HepG2 (cell line): ENCODE measurements at regions of chr17 and their contacts with region 1.

Region 1: DNA sequence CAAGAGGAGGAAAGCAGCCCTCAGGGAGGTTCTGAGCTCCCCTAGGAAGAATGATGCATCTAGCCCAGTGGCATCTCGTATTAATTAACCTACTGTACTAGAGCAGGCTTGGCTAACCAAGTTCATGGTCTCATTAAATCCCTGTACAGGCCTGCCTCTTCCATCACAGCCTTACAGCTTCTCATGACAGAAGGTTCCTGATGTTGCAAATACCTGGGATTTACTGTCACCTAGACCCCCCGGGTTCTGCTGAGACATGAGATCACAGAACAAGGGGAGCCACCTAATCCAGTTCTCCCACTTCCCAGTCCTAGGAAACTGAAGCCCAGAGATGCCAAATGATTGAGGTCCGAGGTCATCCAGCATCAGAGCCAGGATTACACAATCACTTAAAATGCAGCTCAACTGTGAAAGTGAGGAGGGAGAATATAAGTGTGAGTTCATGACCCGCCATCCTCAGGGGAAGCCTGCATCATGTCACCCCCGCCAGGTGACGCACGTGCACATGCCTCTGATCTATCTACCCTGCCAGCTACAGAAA is 23.9 kb downstream of the ACLY start:
- DNase-seq: no peak
- ATAC-seq: no peak
- H3K4me3 ChIP-seq: no peak overlapping the region
- H3K27ac ChIP-seq: no peak overlapping the region
- H3K4me1 ChIP-seq: peaks cover 25% of the 10 kb centered on the region
- H3K27me3 ChIP-seq: no peaks in the 10 kb centered on the region
- CTCF ChIP-seq: no peak
- EP300 ChIP-seq: no peak
- POLR2A ChIP-seq: no peak
- RAD21 ChIP-seq: no peak

Region 2: GRCh38 chr17:41918314-41919164 is 23.7 kb after region 1 on chr17 and contains the start of gene ACLY:
- CTCF ChIA-PET with region 1: no interaction called
- POLR2A ChIA-PET with region 1: interaction called, 16 read pairs
- in situ Hi-C with region 1: no loop called
- intact Hi-C with region 1: no loop called
- DNase-seq: peak; percentile 97
- ATAC-seq: peak; percentile 93
- H3K4me3 ChIP-seq: peak within 1 kb of the TSS; percentile 96 to 98 (median 97)
- H3K27ac ChIP-seq: peak within 1 kb of the TSS; percentile 81
- H3K4me1 ChIP-seq: peaks cover 71% of the 10 kb centered on the region
- H3K27me3 ChIP-seq: no peaks in the 10 kb centered on the region; a peak in 1 of 5 replicates
- CTCF ChIP-seq: no peak
- EP300 ChIP-seq: 0 out of 4 replicates have a peak, but pooled peaks of 1 of the 2 experiments have one; percentile 45
- POLR2A ChIP-seq: peak; percentile 88 to 97
- RAD21 ChIP-seq: no peak; the same call in none of the 2 replicates
- total RNA-seq, gene ACLY: 218 and 277 TPM in 2 replicates